ENCODE measurements at regions of chr6 and their contacts with region 1.

Region 1: DNA sequence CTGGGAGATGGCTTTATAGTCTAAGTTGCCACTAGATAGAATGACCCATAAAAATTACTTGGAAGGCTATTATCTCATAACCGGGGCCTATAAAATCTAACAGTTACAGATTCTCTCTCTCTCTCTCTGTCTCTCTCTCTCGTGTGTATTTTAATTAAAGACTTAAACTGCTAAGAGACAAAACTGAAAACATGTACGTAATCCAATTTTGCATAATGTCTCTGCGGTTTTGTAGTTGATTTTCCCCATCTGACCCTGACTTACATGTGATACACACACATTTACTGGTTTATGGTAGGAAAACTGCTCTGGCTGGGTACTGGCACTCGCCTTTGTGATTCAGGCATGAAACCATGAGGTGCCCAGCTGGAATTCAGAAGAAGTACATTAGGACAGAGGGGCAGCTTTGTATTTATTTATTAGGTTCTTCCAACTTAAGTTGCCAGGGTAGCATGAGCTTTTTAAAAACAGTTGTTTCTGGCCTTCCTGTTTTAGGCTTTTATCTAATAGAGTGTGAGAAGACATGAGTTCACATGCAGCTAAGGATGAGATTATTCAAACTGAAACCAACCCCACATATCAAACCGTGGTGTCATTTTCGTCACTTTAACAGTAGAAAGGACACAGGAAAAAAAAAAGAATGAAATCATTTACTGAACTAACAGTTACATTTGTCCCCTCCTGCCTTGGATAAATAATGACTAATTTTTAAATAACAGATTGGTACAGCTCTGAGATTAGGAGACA is 182.5 kb downstream of the GMPR start:
- DNase-seq: peak; percentile 65
- ATAC-seq: peak; percentile 89
- H3K4me3 Mint-ChIP-seq: peak overlapping the region; percentile 52
- H3K27ac Mint-ChIP-seq: peak overlapping the region; percentile 98
- H3K4me1 Mint-ChIP-seq: peaks cover 52% of the 10 kb centered on the region
- H3K27me3 Mint-ChIP-seq: no peaks in the 10 kb centered on the region

Region 2: DNA sequence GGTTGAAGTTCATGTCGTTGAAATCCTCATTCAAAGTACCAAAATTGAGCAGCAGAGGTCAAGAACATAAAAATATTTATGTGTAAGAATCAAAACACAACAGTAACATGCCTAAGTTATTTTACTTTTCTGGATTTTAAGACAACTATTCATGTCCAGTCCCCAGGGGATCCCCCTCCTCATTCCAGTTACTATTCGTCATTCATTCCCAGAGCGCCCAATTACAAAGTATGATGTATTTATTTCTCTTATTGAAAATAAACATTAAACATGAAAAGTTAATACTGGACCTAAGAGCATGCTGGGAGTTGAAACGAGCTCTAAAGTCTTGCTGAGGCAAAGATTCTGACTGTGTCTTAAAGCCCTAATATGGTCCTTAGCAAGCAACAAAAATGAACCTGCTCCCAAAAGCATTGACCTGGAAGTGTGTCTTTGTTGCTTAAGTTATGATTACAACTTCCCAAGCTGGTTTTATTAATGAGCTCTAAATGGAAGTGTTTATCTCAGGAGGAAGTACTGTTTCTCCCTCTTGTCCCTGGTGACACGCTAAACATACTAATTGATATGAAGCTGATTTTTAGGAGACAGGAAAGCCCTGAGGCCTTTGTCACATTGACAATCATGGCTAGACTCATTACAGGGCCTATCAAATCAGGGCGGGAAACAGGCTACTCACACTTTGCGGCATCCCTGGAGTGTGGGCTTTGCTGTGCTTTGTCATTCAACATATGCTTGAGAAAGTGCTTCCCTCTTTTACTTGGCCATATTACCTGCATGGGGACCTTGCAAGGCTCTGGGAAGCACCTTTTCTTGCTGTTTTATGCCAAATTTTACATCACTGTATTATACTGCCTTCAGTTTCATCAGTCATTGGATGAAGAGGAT is 565.8 kb before region 1 on chr6:
- CTCF ChIA-PET with region 1: no interaction called
- DNase-seq: no peak
- ATAC-seq: no peak
- H3K4me3 Mint-ChIP-seq: no peak overlapping the region
- H3K27ac Mint-ChIP-seq: no peak overlapping the region
- H3K4me1 Mint-ChIP-seq: no peaks in the 10 kb centered on the region
- H3K27me3 Mint-ChIP-seq: peaks cover 11% of the 10 kb centered on the region

Region 3: GRCh38 chr6:16409531-16410441 is 11.1 kb before region 1 on chr6:
- CTCF ChIA-PET with region 1: interaction called, 21 read pairs
- DNase-seq: peak; percentile 75
- ATAC-seq: peak; percentile 54
- H3K4me3 Mint-ChIP-seq: no peak overlapping the region
- H3K27ac Mint-ChIP-seq: peak overlapping the region; percentile 56
- H3K4me1 Mint-ChIP-seq: peaks cover 47% of the 10 kb centered on the region
- H3K27me3 Mint-ChIP-seq: no peaks in the 10 kb centered on the region

Region 4: DNA sequence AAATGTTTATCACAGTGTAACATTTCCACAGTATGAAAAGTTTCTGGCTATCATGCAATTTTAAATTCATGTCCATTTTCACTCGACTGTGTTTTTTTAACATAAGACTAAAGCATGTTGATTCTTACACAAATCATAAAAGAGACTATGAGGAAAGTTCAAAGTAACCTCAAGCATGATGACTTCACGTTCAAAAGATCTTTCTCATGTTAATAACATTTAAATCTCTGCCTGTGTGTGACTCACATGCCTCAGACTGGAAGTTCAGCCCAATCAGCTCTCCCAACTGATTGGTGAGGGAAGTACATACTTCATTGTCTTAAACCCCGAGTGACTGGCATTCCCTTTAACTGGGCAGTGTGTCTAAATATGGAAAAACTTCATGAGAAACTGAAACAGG is 302.9 kb after region 1 on chr6:
- CTCF ChIA-PET with region 1: no interaction called
- DNase-seq: no peak
- ATAC-seq: no peak
- H3K4me3 Mint-ChIP-seq: no peak overlapping the region
- H3K27ac Mint-ChIP-seq: no peak overlapping the region
- H3K4me1 Mint-ChIP-seq: peaks cover 37% of the 10 kb centered on the region
- H3K27me3 Mint-ChIP-seq: no peaks in the 10 kb centered on the region

Measured in activated CD8-positive, alpha-beta memory T cell treated with anti-CD3 and anti-CD28 coated beads, Interleukin-2, amount 10 ng/mL, durations not matched to agents 7 days and 5 days (primary cell).